ENCODE measurements at regions of chr2 and their contacts with region 1.

Region 1: DNA sequence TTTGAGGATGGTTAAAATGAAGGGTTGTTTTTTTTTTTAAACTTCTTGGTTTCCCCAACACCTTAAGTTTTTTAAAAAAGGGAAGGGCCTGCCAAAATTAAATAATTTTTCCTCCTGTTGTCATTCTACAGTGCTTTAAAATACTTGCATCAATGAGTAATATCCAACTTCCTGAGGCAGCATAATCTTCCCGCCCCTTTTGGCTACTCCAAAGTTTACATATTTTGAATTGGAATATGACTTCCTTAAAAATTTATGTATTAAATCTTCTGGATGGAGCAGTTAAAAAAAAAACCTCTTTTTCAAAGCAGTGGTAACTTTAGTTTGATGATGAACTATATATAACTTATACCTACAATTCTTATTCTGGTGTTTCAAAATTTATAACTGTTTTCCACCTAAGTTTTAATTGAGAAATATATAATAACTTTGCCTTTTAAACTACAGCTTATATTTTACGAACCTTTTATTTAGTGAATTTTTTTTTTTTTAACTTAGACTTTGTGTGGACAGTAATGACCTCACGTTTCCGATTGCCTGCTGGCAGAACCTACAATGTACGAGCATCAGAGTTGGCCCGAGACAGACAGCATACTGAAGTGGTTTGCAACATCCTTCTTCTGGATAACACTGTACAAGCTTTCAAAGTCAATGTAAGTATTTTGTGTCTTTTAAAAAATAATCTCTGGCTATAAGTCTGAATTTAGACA is 49.8 kb downstream of the PTPN4 start:
- DNase-seq: no peak
- ATAC-seq: no peak
- H3K4me3 ChIP-seq: no peak overlapping the region
- H3K4me3 Mint-ChIP-seq: peak overlapping the region in 1 of 10 donors; percentile 23
- H3K27ac ChIP-seq: no peak overlapping the region
- H3K27ac Mint-ChIP-seq: peak overlapping the region in 4 of 9 donors; percentile 9 to 72 (median 19)
- H3K4me1 ChIP-seq: no peaks in the 10 kb centered on the region
- H3K4me1 Mint-ChIP-seq: peaks cover 0 to 82% (median 64%) of the 10 kb centered on the region in 7 donors
- H3K27me3 ChIP-seq: no peaks in the 10 kb centered on the region
- H3K27me3 Mint-ChIP-seq: no peaks in the 10 kb centered on the region

Region 2: GRCh38 chr2:118019821-118020220 is 1789.7 kb before region 1 on chr2:
- CTCF ChIA-PET with region 1: no interaction called
- POLR2A ChIA-PET with region 1: no interaction called
- intact Hi-C with region 1: loop called in 1 of 2 experiments (anchors 10 kb)
- DNase-seq: no peak
- ATAC-seq: no peak
- H3K4me3 ChIP-seq: no peak overlapping the region
- H3K4me3 Mint-ChIP-seq: no peak overlapping the region
- H3K27ac ChIP-seq: no peak overlapping the region
- H3K27ac Mint-ChIP-seq: no peak overlapping the region
- H3K4me1 ChIP-seq: no peaks in the 10 kb centered on the region
- H3K4me1 Mint-ChIP-seq: peaks cover 7 to 27% (median 10%) of the 10 kb centered on the region in 7 donors
- H3K27me3 ChIP-seq: no peaks in the 10 kb centered on the region
- H3K27me3 Mint-ChIP-seq: peaks cover 0 to 24% (median 10%) of the 10 kb centered on the region in 5 donors

Region 3: DNA sequence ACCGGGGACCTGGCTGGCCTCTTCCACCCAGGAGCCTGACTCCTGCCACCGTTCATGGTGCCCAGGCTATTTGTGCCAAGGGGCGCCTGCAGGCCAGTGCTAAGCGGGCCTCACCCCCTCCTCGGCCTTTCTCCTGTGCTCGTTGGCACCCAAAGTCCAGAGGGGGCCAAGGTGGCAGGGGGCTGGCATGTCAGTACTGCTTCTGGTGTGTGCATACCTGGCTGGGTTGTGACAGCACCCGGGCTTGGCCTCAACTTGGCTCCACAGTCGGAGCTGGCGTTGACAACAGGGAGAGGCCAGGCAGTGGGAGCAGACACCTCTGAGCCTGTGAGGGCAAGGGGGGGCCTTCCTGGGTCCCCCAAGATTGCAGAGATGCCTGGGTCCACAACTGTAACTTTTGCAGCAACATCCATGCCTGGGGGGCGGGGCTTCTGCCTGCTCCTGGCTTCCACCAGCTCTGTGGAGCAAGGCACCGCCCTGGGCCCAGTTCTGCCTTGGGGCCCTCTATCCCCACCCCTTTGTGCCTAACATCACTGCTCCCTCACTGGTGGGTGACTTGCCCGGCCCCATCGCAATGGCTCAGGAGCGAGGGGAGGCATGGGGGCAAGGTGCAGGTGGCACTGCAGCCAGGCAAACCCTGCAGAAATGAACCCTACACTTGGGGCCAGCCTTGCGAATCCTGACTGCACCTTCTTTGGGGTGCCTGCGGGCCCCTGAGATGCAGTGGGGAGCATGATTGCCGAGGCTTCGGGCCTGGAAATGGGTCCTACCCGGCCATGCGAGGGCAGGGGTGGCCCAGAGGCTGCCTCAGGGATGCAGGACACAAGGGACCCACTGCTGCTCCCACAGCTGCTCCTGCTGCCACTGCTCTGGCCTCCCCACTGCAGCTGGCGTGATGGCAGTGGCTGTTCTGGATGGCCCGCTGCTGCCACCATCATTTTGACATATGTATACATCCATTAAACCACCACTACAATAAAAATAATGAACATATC is 13.9 kb before region 1 on chr2:
- CTCF ChIA-PET with region 1: no interaction called
- POLR2A ChIA-PET with region 1: interaction called, 4 read pairs
- intact Hi-C with region 1: loop called in 1 of 2 experiments (anchors 2 kb)
- DNase-seq: no peak
- ATAC-seq: no peak
- H3K4me3 ChIP-seq: no peak overlapping the region
- H3K4me3 Mint-ChIP-seq: peak overlapping the region in 1 of 10 donors; percentile 19
- H3K27ac ChIP-seq: no peak overlapping the region
- H3K27ac Mint-ChIP-seq: peak overlapping the region in 3 of 9 donors; percentile 14 to 69 (median 58)
- H3K4me1 ChIP-seq: peaks cover 0 to 4% of the 10 kb centered on the region in 2 donors
- H3K4me1 Mint-ChIP-seq: peaks cover 2 to 71% (median 55%) of the 10 kb centered on the region in 7 donors
- H3K27me3 ChIP-seq: no peaks in the 10 kb centered on the region
- H3K27me3 Mint-ChIP-seq: no peaks in the 10 kb centered on the region